ENCODE measurements at regions of chr16 and their contacts with region 1.

Region 1: DNA sequence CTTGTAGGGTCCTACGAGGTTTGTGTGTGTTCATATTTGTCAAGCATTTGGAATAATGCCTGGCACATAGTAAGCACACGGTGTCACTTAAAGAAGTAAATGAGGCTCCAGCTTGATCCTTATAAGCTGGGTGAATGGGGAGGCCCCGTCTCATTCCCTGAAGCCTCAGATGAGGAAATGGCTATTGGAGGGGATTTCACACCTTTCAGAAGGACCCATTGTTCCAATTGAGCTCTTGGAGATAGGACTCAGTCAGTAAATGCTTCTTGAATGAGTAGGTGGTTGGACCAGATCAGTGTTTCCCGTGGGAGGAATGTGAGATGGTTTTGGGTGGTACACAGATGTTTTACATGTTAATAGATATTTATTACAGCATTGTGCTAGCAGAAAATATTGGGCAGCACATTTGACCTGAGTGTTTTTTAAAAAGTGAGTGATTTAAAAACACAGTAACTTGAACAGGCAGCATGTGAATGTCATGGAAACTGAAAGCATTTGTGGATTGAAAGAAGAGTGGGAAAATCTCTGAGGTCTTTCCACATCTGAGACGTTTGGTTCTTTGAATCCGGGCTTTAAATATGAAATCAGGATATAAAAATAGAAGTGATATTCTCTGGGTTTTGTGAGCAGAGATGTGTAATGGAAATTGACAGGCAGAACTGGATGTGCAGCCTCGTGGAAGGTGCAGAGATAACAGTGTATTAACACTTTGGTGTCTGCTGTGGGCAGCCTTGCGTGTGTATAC is 36.4 kb upstream of the ARHGAP17 start:
- DNase-seq: no peak
- ATAC-seq: no peak
- H3K4me3 ChIP-seq: no peak overlapping the region
- H3K27ac ChIP-seq: peak overlapping the region; percentile 28 to 47
- H3K4me1 ChIP-seq: peaks cover 0 to 3% of the 10 kb centered on the region in 2 donors
- H3K27me3 ChIP-seq: no peaks in the 10 kb centered on the region

Region 2: GRCh38 chr16:24789881-24790280 is 261.7 kb before region 1 on chr16:
- intact Hi-C with region 1: no loop called
- DNase-seq: no peak
- ATAC-seq: no peak
- H3K4me3 ChIP-seq: no peak overlapping the region
- H3K27ac ChIP-seq: no peak overlapping the region
- H3K4me1 ChIP-seq: peaks cover 0 to 2% of the 10 kb centered on the region in 2 donors
- H3K27me3 ChIP-seq: no peaks in the 10 kb centered on the region

Region 3: GRCh38 chr16:24906199-24907020 is 145.2 kb before region 1 on chr16:
- intact Hi-C with region 1: no loop called
- DNase-seq: peak in 1 of 2 donors; percentile 38
- ATAC-seq: no peak
- H3K4me3 ChIP-seq: no peak overlapping the region
- H3K27ac ChIP-seq: no peak overlapping the region
- H3K4me1 ChIP-seq: no peaks in the 10 kb centered on the region
- H3K27me3 ChIP-seq: no peaks in the 10 kb centered on the region

Region 4: GRCh38 chr16:25126820-25127232 is 75.2 kb after region 1 on chr16:
- intact Hi-C with region 1: loop called in 1 of 2 experiments (anchors 2 kb)
- DNase-seq: no peak
- ATAC-seq: no peak
- H3K4me3 ChIP-seq: no peak overlapping the region
- H3K27ac ChIP-seq: no peak overlapping the region
- H3K4me1 ChIP-seq: no peaks in the 10 kb centered on the region
- H3K27me3 ChIP-seq: no peaks in the 10 kb centered on the region

Region 5: DNA sequence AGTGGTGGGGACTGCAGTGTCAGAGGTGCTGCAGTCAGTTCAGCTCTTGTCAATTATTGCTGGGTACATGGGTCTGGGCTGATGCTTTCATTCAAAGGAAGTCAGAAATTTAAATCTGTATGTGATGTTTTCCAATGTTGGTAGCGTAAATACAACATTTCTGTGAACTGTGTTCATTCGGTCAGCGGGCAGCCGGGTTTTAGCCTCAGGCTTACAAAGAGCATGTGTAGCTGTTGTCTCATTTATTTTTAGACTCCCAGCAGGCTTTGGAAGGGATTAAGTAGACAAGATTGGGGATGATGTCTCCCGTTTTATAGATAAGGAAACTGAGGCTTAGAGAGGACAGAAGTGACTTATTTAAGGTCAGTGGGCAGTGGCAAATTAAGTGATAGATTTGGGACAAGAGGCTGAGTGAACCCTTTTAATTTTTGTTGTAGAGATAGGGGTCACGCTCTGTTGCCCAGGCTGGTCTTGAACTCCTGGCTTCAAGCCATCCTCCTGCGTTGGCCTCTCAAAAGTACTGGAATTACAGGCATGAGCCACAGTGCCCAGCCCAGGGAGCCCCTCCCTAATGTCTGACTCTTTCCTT is 173.2 kb after region 1 on chr16:
- intact Hi-C with region 1: loop called (anchors 5 kb)
- DNase-seq: no peak
- ATAC-seq: no peak
- H3K4me3 ChIP-seq: no peak overlapping the region
- H3K27ac ChIP-seq: no peak overlapping the region
- H3K4me1 ChIP-seq: no peaks in the 10 kb centered on the region
- H3K27me3 ChIP-seq: no peaks in the 10 kb centered on the region